Activated naive CD4-positive, alpha-beta T cell treated with anti-CD3 and anti-CD28 coated beads for 36 hours (primary cell): ENCODE measurements at regions of chr2 and their contacts with region 1.

Region 1: DNA sequence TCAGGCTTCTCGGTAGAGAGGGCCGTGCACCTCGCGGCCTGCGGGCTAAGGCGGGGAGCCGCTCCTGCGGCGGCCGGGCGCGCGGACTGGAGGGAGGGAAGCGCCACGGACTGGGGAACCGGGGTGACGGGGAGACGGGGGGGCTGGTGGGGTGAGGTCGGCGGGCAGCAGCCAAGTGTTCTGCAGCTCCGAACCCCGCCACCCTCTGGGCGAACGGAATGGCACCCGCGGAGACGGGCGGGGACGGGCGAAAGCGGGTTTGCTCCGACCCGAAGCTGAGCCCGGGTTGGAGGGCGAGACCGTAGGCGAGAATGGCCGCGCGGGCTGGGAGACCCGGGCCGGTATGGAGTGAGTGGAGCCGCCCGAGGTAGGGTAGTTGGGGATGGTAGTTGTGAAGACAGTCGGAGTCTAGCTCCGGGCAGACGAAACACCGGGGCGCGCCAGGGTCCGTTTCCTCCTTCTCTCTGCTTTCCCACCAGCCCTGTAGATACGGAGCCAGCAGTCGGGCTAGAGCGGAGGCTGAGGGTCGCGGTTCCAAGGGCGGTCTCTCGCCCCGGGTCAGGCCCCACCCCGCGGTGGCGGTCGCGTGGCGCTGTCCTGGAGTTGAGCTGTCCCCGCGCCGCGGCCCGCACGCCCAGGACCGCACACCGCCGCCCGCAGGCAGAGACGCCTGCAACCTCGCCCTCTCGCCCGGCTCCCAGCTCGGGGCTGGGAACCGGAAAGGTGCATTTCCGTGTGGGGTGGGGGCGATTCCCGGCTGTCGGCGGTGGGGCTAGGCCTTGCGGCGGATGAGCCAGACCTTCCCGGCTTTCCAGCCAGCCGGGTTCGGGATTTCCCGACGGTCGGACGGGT is 160.3 kb upstream of the SIX2 start:
- DNase-seq: peak; percentile 9
- H3K4me3 Mint-ChIP-seq: peak overlapping the region; percentile 62
- H3K27ac Mint-ChIP-seq: no peak overlapping the region
- H3K4me1 Mint-ChIP-seq: peaks cover 10% of the 10 kb centered on the region
- H3K27me3 Mint-ChIP-seq: peaks cover 59% of the 10 kb centered on the region

Region 2: GRCh38 chr2:45009303-45009927 is 160.2 kb before region 1 on chr2 and contains the start of gene SIX2:
- CTCF ChIA-PET with region 1: no interaction called
- intact Hi-C with region 1: loop called (anchors 1 kb)
- DNase-seq: no peak
- H3K4me3 Mint-ChIP-seq: peak within 1 kb of the TSS; percentile 59
- H3K27ac Mint-ChIP-seq: no peak within 1 kb of the TSS
- H3K4me1 Mint-ChIP-seq: peaks cover 30% of the 10 kb centered on the region
- H3K27me3 Mint-ChIP-seq: peaks cover 71% of the 10 kb centered on the region
- total RNA-seq, gene SIX2: not detected

Region 3: GRCh38 chr2:45199973-45200372 is 30.4 kb after region 1 on chr2:
- CTCF ChIA-PET with region 1: no interaction called
- intact Hi-C with region 1: no loop called
- DNase-seq: no peak
- H3K4me3 Mint-ChIP-seq: no peak overlapping the region
- H3K27ac Mint-ChIP-seq: no peak overlapping the region
- H3K4me1 Mint-ChIP-seq: no peaks in the 10 kb centered on the region
- H3K27me3 Mint-ChIP-seq: peaks cover 2% of the 10 kb centered on the region